ENCODE measurements at regions of chr12 and their contacts with region 1.

Region 1: GRCh38 chr12:53419761-53420160 is 3.9 kb upstream of the AMHR2 start:
- DNase-seq: no peak
- ATAC-seq: no peak

Region 2: GRCh38 chr12:53352331-53353256 is 67.2 kb before region 1 on chr12:
- intact Hi-C with region 1: loop called (anchors 2 kb)
- DNase-seq: peak; percentile 74
- ATAC-seq: peak; percentile 98

Measured in left ventricle myocardium superior (tissue), 1 donor.